ENCODE measurements at regions of chr5 and their contacts with region 1.

Region 1: DNA sequence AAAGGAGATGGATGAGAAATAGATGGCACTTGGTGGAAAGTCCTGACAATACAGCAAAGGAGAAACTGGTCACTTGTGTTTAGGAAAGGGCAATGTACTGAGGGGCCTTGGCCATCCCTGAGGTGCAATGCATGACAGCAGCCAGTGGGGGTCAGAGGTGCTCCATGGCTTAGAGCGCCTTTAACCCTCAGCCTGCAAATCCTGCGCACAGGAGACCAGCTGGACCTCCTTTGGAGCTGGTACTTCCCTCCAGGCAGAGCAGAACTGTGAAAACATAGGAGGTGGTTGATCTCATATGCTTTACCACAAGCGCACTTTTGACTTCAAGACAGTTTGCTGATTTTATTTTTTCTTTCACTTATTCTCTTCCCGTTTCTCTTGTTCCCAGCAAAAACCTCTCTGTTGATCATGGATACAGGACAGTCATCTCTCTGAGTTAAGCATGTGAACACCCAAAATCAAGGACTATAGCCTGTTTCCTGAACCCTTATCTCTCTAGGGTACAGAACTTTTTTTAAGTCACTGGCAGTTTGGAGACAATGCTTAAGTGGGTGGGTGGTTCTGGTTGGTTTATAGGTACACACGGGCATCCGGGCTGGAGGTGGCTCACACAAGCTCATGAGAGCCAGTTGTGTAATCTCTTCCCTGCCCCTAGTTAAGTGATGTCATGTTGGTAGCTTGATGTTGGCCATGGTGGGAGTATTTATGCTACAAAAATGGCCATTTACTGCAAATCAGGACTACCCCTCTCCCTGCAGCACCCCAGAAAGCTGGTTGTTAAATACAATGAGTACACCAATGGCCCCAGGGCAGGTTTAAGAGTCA is 37.6 kb upstream of the ANKRD55 start:
- DNase-seq: peak; percentile 78
- ATAC-seq: peak; percentile 94
- H3K4me3 Mint-ChIP-seq: no peak overlapping the region
- H3K27ac Mint-ChIP-seq: no peak overlapping the region
- H3K4me1 Mint-ChIP-seq: peaks cover 15% of the 10 kb centered on the region
- H3K27me3 Mint-ChIP-seq: peaks cover 2% of the 10 kb centered on the region

Region 2: DNA sequence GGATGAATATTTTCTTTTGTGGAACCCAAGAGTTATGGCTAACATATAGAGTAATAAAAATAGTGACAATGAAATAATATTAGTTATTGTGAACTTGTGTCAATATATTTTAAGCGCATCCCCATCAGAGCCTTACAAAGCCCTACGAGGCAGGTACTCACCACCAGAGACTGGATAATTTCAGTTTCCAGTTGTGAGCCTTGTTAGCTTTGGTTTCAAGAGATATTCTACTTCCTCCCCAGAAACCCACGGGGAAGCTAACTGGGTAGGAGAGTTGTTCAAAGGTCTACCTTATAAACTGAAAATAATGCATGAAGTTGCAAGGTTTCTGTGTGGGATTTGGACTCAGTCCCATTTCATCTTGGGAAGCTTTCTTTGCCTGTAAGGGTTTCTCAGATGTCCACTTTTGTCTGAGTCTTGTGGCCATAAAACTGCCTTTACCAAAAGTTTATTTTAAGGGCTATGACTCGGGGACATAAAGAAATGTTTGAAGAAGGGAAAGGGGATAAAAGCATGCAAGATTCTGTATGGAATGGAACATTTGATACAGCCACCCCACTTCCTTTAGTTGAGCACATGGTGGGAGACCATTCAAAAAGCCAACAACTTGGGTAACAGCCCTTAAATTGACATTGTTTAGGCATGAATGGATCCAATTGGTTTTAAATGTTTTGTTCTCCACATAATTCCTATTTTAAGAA is 19.7 kb after region 1 on chr5:
- CTCF ChIA-PET with region 1: interaction called, 10 read pairs
- POLR2A ChIA-PET with region 1: no interaction called
- DNase-seq: no peak
- ATAC-seq: no peak
- H3K4me3 Mint-ChIP-seq: no peak overlapping the region
- H3K27ac Mint-ChIP-seq: no peak overlapping the region
- H3K4me1 Mint-ChIP-seq: peaks cover 4% of the 10 kb centered on the region
- H3K27me3 Mint-ChIP-seq: no peaks in the 10 kb centered on the region

Region 3: GRCh38 chr5:56475689-56476486 is 205.1 kb after region 1 on chr5:
- CTCF ChIA-PET with region 1: interaction called, 12 read pairs
- POLR2A ChIA-PET with region 1: no interaction called
- DNase-seq: no peak
- ATAC-seq: no peak
- H3K4me3 Mint-ChIP-seq: no peak overlapping the region
- H3K27ac Mint-ChIP-seq: no peak overlapping the region
- H3K4me1 Mint-ChIP-seq: peaks cover 19% of the 10 kb centered on the region
- H3K27me3 Mint-ChIP-seq: peaks cover 4% of the 10 kb centered on the region

Region 4: GRCh38 chr5:56833325-56833724 is 562.5 kb after region 1 on chr5:
- CTCF ChIA-PET with region 1: interaction called, 112 read pairs
- POLR2A ChIA-PET with region 1: interaction called, 4 read pairs
- DNase-seq: no peak
- ATAC-seq: no peak
- H3K4me3 Mint-ChIP-seq: no peak overlapping the region
- H3K27ac Mint-ChIP-seq: no peak overlapping the region
- H3K4me1 Mint-ChIP-seq: peaks cover 55% of the 10 kb centered on the region
- H3K27me3 Mint-ChIP-seq: no peaks in the 10 kb centered on the region

Region 5: GRCh38 chr5:56876327-56876726 is 605.5 kb after region 1 on chr5:
- CTCF ChIA-PET with region 1: interaction called, 11 read pairs
- POLR2A ChIA-PET with region 1: no interaction called
- DNase-seq: no peak
- ATAC-seq: no peak
- H3K4me3 Mint-ChIP-seq: no peak overlapping the region
- H3K27ac Mint-ChIP-seq: no peak overlapping the region
- H3K4me1 Mint-ChIP-seq: no peaks in the 10 kb centered on the region
- H3K27me3 Mint-ChIP-seq: no peaks in the 10 kb centered on the region